Calu3 (cell line): ENCODE measurements at regions of chr3 and their contacts with region 1.

Region 1: GRCh38 chr3:169041677-169042171 is 621.8 kb downstream of the MECOM start:
- DNase-seq: no peak
- H3K4me3 Mint-ChIP-seq: no peak overlapping the region
- H3K27ac Mint-ChIP-seq: peak overlapping the region; percentile 28
- H3K4me1 Mint-ChIP-seq: peaks cover 12% of the 10 kb centered on the region
- H3K27me3 Mint-ChIP-seq: no peaks in the 10 kb centered on the region
- CTCF ChIP-seq: peak; percentile 63

Region 2: GRCh38 chr3:168870872-168871271 is 170.9 kb before region 1 on chr3:
- CTCF ChIA-PET with region 1: interaction called, 4 read pairs
- intact Hi-C with region 1: loop called (anchors 2 kb)
- DNase-seq: peak; percentile 41
- H3K4me3 Mint-ChIP-seq: peak overlapping the region; percentile 20
- H3K27ac Mint-ChIP-seq: peak overlapping the region; percentile 78
- H3K4me1 Mint-ChIP-seq: peaks cover 86% of the 10 kb centered on the region
- H3K27me3 Mint-ChIP-seq: no peaks in the 10 kb centered on the region
- CTCF ChIP-seq: no peak

Region 3: DNA sequence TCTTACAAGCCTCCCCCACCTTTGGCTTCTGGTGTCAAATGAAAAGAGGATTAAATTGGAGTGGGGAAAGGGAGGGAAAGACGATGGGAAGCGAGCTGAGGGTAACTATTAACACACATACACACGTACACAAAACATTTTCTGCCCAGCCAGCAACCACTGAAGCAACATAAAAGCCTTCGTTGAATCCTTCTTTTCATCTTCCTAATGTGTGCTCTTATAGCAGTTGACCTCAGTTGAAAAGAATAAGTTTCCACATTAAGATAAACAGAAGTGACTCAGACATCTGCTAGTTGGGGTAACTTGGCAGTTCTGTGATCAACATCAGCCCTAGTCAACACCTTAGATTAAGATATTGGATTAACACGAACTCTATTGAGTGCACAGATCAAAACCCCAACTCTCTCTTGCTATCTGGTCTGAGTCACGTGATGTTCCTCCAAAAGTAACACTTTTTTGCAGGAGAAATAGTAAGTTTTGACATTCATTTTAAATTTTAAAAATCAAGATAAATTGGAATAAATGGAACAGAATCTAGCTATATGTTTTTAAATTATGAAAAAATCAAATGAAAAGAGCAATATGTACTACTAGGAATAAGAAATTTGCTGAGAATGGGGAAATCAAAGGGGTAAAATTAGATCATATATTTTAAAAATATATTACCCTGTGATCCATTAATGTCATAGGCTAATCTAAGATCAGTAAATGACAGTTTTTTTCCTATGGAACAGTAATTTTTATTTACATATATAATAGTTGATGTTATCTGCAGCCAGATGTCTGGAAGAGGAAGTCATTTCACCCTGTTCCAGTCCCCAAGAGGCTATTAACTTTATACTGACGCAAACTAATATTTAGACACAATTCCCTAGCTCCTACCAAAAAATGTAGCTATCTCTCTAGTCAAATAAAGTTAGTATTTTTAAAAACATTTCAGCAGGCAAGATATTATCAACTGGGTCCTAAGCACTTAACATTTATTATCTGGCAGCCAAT is 63.5 kb after region 1 on chr3:
- CTCF ChIA-PET with region 1: no interaction called
- intact Hi-C with region 1: loop called (anchors 5 kb)
- DNase-seq: peak; percentile 16
- H3K4me3 Mint-ChIP-seq: peak overlapping the region; percentile 22
- H3K27ac Mint-ChIP-seq: peak overlapping the region; percentile 53
- H3K4me1 Mint-ChIP-seq: peaks cover 51% of the 10 kb centered on the region
- H3K27me3 Mint-ChIP-seq: no peaks in the 10 kb centered on the region
- CTCF ChIP-seq: no peak

Region 4: DNA sequence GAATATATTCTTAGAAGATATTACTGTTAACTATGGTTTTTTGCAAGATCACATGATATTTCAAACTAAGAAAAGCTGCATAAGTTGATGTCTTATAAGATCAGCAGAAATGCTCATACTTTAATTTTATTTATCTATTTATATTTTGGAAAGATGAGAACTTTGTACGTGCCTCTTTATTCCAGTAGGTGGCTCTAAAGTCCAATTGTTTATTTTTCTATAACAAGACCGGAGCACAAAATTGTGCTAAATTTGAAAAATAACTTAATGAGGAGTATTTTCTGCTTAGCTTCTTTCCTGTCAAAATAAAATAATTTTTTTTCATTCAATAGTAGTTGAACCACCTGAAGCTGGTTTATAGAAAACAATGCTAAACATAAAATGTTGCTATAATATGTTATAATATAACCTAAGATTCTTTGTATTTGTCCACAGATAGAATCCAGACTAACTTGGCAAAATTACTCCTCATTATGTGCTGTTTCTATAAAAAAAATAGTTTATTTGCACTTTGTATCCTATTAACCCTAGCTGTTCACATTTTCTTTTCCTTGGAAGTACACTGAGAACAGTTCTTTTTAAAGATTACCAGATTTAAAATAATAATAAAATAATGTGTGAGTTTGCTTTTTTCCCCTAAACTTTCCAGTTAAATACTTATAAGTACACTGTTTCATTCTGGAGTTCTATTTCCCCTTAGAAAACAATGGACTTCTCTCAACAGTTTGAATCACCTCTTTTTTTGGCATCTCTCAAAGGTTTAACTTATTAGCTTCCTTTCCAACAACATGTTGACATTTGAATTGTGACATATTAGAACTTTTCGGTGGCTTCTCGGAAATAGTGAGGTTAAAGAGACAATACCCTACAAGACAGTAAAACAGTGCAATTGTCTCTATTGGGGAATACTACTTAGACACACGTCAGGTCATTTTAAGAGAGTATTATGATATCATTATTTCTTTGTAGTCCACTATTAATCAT is 91.7 kb after region 1 on chr3:
- CTCF ChIA-PET with region 1: no interaction called
- intact Hi-C with region 1: loop called (anchors 5 kb)
- DNase-seq: no peak
- H3K4me3 Mint-ChIP-seq: peak overlapping the region; percentile 33
- H3K27ac Mint-ChIP-seq: peak overlapping the region; percentile 75
- H3K4me1 Mint-ChIP-seq: peaks cover 75% of the 10 kb centered on the region
- H3K27me3 Mint-ChIP-seq: no peaks in the 10 kb centered on the region
- CTCF ChIP-seq: peak; percentile 63

Region 5: GRCh38 chr3:169295126-169295525 is 253.4 kb after region 1 on chr3:
- CTCF ChIA-PET with region 1: no interaction called
- intact Hi-C with region 1: loop called (anchors 5 kb)
- DNase-seq: peak; percentile 51
- H3K4me3 Mint-ChIP-seq: no peak overlapping the region
- H3K27ac Mint-ChIP-seq: peak overlapping the region; percentile 84
- H3K4me1 Mint-ChIP-seq: peaks cover 72% of the 10 kb centered on the region
- H3K27me3 Mint-ChIP-seq: no peaks in the 10 kb centered on the region
- CTCF ChIP-seq: peak; percentile 72

Region 6: GRCh38 chr3:169512991-169513390 is 471.3 kb after region 1 on chr3:
- CTCF ChIA-PET with region 1: no interaction called
- intact Hi-C with region 1: no loop called
- DNase-seq: no peak
- H3K4me3 Mint-ChIP-seq: no peak overlapping the region
- H3K27ac Mint-ChIP-seq: no peak overlapping the region
- H3K4me1 Mint-ChIP-seq: no peaks in the 10 kb centered on the region
- H3K27me3 Mint-ChIP-seq: no peaks in the 10 kb centered on the region
- CTCF ChIP-seq: no peak